ENCODE measurements at regions of chr2 and their contacts with region 1.

Region 1: GRCh38 chr2:54838585-54839035 is 115.1 kb downstream of the EML6 start:
- DNase-seq: peak; percentile 50 to 63
- H3K4me3 ChIP-seq: no peak overlapping the region
- H3K27ac ChIP-seq: no peak overlapping the region
- H3K4me1 ChIP-seq: no peaks in the 10 kb centered on the region
- H3K27me3 ChIP-seq: no peaks in the 10 kb centered on the region
- CTCF ChIP-seq: peak; percentile 98

Region 2: DNA sequence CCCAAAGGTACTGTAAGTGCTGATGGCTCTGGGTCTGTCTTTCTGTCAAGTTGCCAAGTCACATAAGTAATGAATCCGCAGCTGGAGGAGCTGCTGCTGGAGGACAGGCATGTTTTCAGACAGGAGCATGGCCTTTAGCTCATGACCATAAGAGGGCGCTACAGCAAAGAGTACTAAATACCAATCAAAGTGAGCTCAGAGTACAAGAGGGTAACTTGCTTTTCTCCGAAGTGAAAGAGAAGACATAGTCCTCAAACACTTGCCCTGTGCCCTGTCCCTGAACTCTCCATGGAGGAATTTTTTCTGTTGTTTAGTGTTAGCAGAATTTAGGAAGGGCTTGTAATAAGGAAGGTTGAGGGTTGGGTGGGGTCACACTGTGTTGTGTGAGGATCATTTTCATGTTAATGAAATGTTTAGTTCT is 173.2 kb before region 1 on chr2:
- CTCF ChIA-PET with region 1: interaction called, 8 read pairs
- POLR2A ChIA-PET with region 1: no interaction called
- intact Hi-C with region 1: loop called (anchors 1 kb)
- DNase-seq: peak in 1 of 2 experiments; percentile 34
- H3K4me3 ChIP-seq: no peak overlapping the region
- H3K27ac ChIP-seq: no peak overlapping the region
- H3K4me1 ChIP-seq: peaks cover 8% of the 10 kb centered on the region; the same call in 1 of the 2 replicates
- H3K27me3 ChIP-seq: no peaks in the 10 kb centered on the region
- CTCF ChIP-seq: peak; percentile 76

Measured in PC-9 (cell line).